GM12878 (cell line): ENCODE measurements at regions of chr6 and their contacts with region 1.

Region 1: GRCh38 chr6:125314019-125314581 is 12.3 kb upstream of the HDDC2 start:
- DNase-seq: no peak
- ATAC-seq: peak; percentile 97
- H3K4me3 ChIP-seq: no peak overlapping the region
- H3K27ac ChIP-seq: no peak overlapping the region
- H3K4me1 ChIP-seq: no peaks in the 10 kb centered on the region
- H3K27me3 ChIP-seq: no peaks in the 10 kb centered on the region
- CTCF ChIP-seq: peak; percentile 76 to 95 (median 88)
- EP300 ChIP-seq: no peak
- POLR2A ChIP-seq: no peak
- RAD21 ChIP-seq: peak; percentile 96

Region 2: GRCh38 chr6:125191916-125192609 is 122.0 kb before region 1 on chr6:
- CTCF ChIA-PET with region 1: interaction called, 16 read pairs
- POLR2A ChIA-PET with region 1: no interaction called
- RAD21 ChIA-PET with region 1: no interaction called
- SMC1A ChIA-PET with region 1: interaction called, 3 read pairs
- in situ Hi-C with region 1: no loop called
- intact Hi-C with region 1: loop called (anchors 5 kb)
- DNase-seq: peak; percentile 7
- ATAC-seq: peak; percentile 97
- H3K4me3 ChIP-seq: no peak overlapping the region
- H3K27ac ChIP-seq: no peak overlapping the region
- H3K4me1 ChIP-seq: no peaks in the 10 kb centered on the region
- H3K27me3 ChIP-seq: no peaks in the 10 kb centered on the region
- CTCF ChIP-seq: peak; percentile 75 to 83 (median 75)
- EP300 ChIP-seq: no peak
- POLR2A ChIP-seq: no peak
- RAD21 ChIP-seq: peak; percentile 41; the same call in 1 of the 2 replicates

Region 3: DNA sequence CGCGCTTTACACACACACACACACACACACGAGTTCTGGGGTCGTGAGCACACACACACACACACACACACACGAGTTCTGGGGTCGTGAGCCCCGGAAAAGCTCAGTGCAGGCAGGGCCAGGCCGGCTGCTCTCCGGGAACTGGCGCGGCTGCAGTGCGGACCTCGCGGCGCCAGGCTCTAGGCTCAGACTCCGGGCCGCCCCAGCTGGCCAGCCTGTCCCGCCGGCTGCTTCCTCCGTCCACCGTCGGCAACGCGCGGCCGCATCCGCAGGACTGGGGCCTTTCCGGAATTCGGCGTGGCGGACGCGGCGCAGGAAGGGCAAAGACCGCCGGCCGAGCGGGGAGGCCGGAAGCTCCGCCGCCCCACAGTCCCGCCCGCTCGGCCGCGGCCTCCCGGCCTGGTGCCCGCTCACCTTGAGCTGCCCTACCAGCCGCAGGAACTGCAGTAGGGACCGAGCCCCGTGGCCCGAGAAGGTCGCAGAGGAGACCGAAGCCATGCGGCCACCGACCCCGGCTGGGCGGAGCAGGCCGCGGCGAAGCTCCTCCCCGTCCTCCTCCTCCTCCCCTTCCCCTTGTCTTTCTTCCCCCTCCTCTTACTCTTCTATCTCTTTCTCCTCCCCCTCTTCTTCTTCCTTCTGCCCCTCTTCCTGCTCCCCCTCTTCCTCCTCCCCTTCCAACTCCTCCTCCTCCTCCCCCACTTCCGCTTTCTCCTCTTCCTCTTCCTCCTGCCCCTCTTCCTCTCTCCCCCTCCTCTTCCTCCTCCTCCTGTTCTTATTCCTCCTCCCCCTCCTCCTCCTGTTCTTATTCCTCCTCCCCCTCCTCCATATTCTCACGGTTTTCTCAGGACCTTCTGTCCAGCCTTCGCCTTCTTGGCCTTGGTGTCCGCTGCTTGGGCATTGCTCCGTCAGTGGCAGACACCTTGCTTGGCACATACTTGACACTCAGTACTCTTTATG is 12.4 kb before region 1 on chr6 and contains the start of gene HDDC2:
- CTCF ChIA-PET with region 1: interaction called, 16 read pairs
- POLR2A ChIA-PET with region 1: interaction called, 4 read pairs
- RAD21 ChIA-PET with region 1: interaction called, 4 read pairs
- SMC1A ChIA-PET with region 1: interaction called, 9 read pairs
- in situ Hi-C with region 1: no loop called
- intact Hi-C with region 1: no loop called
- DNase-seq: no peak
- ATAC-seq: peak; percentile 88
- H3K4me3 ChIP-seq: peak within 1 kb of the TSS; percentile 74
- H3K27ac ChIP-seq: peak within 1 kb of the TSS; percentile 82
- H3K4me1 ChIP-seq: no peaks in the 10 kb centered on the region
- H3K27me3 ChIP-seq: peaks cover 0 to 3% of the 10 kb centered on the region in 2 experiments; a peak in 1 of 4 replicates
- CTCF ChIP-seq: no peak
- EP300 ChIP-seq: no peak
- POLR2A ChIP-seq: peak; percentile 84
- RAD21 ChIP-seq: no peak
- polyA plus RNA-seq, gene HDDC2: 132 to 134 TPM

Region 4: GRCh38 chr6:125480571-125480970 is 166.5 kb after region 1 on chr6:
- CTCF ChIA-PET with region 1: no interaction called
- POLR2A ChIA-PET with region 1: no interaction called
- RAD21 ChIA-PET with region 1: no interaction called
- SMC1A ChIA-PET with region 1: no interaction called
- in situ Hi-C with region 1: no loop called
- intact Hi-C with region 1: no loop called
- DNase-seq: no peak
- ATAC-seq: no peak
- H3K4me3 ChIP-seq: no peak overlapping the region
- H3K27ac ChIP-seq: no peak overlapping the region
- H3K4me1 ChIP-seq: no peaks in the 10 kb centered on the region
- H3K27me3 ChIP-seq: no peaks in the 10 kb centered on the region
- CTCF ChIP-seq: no peak
- EP300 ChIP-seq: no peak
- POLR2A ChIP-seq: no peak
- RAD21 ChIP-seq: no peak

Region 5: DNA sequence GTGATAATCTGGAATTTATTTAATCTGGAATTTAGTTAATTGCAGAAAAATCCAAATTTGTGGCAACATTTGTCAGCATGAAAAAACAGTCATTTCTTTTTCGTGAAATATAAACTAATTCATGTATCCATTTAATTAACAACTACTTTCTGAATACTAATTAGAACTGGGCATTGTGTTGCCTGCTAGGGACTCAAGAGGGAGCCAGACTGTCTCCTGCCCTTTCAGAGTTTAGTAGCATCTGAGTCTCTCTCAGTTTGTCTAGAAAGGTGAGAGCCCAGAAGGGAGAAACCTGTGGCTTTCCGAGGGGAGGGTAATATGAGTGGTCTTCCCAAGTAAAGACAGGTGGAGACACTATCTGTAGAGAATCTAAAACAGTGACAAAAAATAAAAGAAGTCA is 198.5 kb after region 1 on chr6:
- CTCF ChIA-PET with region 1: interaction called, 3 read pairs
- POLR2A ChIA-PET with region 1: no interaction called
- RAD21 ChIA-PET with region 1: no interaction called
- SMC1A ChIA-PET with region 1: interaction called, 3 read pairs
- in situ Hi-C with region 1: no loop called
- intact Hi-C with region 1: loop called (anchors 5 kb)
- DNase-seq: no peak
- ATAC-seq: peak; percentile 81
- H3K4me3 ChIP-seq: no peak overlapping the region
- H3K27ac ChIP-seq: no peak overlapping the region
- H3K4me1 ChIP-seq: no peaks in the 10 kb centered on the region
- H3K27me3 ChIP-seq: 0 out of 4 replicates have a peak, but pooled peaks cover 0 to 4% of the 10 kb centered on the region in 2 experiments
- CTCF ChIP-seq: peak; percentile 55 to 63 (median 60)
- EP300 ChIP-seq: no peak
- POLR2A ChIP-seq: no peak
- RAD21 ChIP-seq: peak; percentile 77

Region 6: GRCh38 chr6:125700581-125701353 is 386.7 kb after region 1 on chr6:
- CTCF ChIA-PET with region 1: no interaction called
- POLR2A ChIA-PET with region 1: no interaction called
- RAD21 ChIA-PET with region 1: no interaction called
- SMC1A ChIA-PET with region 1: no interaction called
- in situ Hi-C with region 1: no loop called
- intact Hi-C with region 1: no loop called
- DNase-seq: no peak
- ATAC-seq: no peak
- H3K4me3 ChIP-seq: no peak overlapping the region
- H3K27ac ChIP-seq: no peak overlapping the region
- H3K4me1 ChIP-seq: no peaks in the 10 kb centered on the region
- H3K27me3 ChIP-seq: 0 out of 4 replicates have a peak, but pooled peaks cover 0 to 1% of the 10 kb centered on the region in 2 experiments
- CTCF ChIP-seq: no peak
- EP300 ChIP-seq: no peak
- POLR2A ChIP-seq: no peak
- RAD21 ChIP-seq: no peak

Region 7: GRCh38 chr6:125714441-125715090 is 400.5 kb after region 1 on chr6:
- CTCF ChIA-PET with region 1: interaction called, 11 read pairs
- POLR2A ChIA-PET with region 1: no interaction called
- RAD21 ChIA-PET with region 1: no interaction called
- SMC1A ChIA-PET with region 1: interaction called, 4 read pairs
- in situ Hi-C with region 1: no loop called
- intact Hi-C with region 1: no loop called
- DNase-seq: peak; percentile 55
- ATAC-seq: peak; percentile 83
- H3K4me3 ChIP-seq: no peak overlapping the region
- H3K27ac ChIP-seq: no peak overlapping the region
- H3K4me1 ChIP-seq: peaks cover 28% of the 10 kb centered on the region
- H3K27me3 ChIP-seq: no peaks in the 10 kb centered on the region
- CTCF ChIP-seq: no peak
- EP300 ChIP-seq: 0 out of 4 replicates have a peak, but pooled peaks of 1 of the 2 experiments have one; percentile 32
- POLR2A ChIP-seq: no peak
- RAD21 ChIP-seq: no peak

Region 8: GRCh38 chr6:125764121-125764671 is 450.1 kb after region 1 on chr6:
- CTCF ChIA-PET with region 1: interaction called, 306 read pairs
- POLR2A ChIA-PET with region 1: no interaction called
- RAD21 ChIA-PET with region 1: interaction called, 134 read pairs
- SMC1A ChIA-PET with region 1: interaction called, 49 read pairs
- in situ Hi-C with region 1: loop called (anchors 5 kb)
- intact Hi-C with region 1: loop called (anchors 1 kb)
- DNase-seq: no peak
- ATAC-seq: no peak; the same call in 2 of the 3 replicates
- H3K4me3 ChIP-seq: no peak overlapping the region
- H3K27ac ChIP-seq: no peak overlapping the region
- H3K4me1 ChIP-seq: no peaks in the 10 kb centered on the region
- H3K27me3 ChIP-seq: no peaks in the 10 kb centered on the region
- CTCF ChIP-seq: no peak
- EP300 ChIP-seq: no peak
- POLR2A ChIP-seq: no peak
- RAD21 ChIP-seq: no peak

Region 9: GRCh38 chr6:125974214-125974866 is 660.2 kb after region 1 on chr6:
- CTCF ChIA-PET with region 1: interaction called, 14 read pairs
- POLR2A ChIA-PET with region 1: no interaction called
- RAD21 ChIA-PET with region 1: interaction called, 12 read pairs
- SMC1A ChIA-PET with region 1: interaction called, 10 read pairs
- in situ Hi-C with region 1: loop called (anchors 5 kb)
- intact Hi-C with region 1: loop called (anchors 2 kb)
- DNase-seq: no peak
- ATAC-seq: peak; percentile 93
- H3K4me3 ChIP-seq: no peak overlapping the region
- H3K27ac ChIP-seq: no peak overlapping the region
- H3K4me1 ChIP-seq: no peaks in the 10 kb centered on the region
- H3K27me3 ChIP-seq: no peaks in the 10 kb centered on the region
- CTCF ChIP-seq: peak; percentile 21 to 57 (median 49); a peak in 3 of 6 replicates
- EP300 ChIP-seq: no peak
- POLR2A ChIP-seq: no peak
- RAD21 ChIP-seq: peak; percentile 48